Activated CD4-positive, alpha-beta memory T cell treated with anti-CD3 and anti-CD28 coated beads for 36 hours (primary cell): ENCODE measurements at regions of chr1 and their contacts with region 1.

Region 1: GRCh38 chr1:89298461-89298860 is 25.8 kb upstream of the GBP5 start:
- DNase-seq: no peak
- H3K4me3 Mint-ChIP-seq: no peak overlapping the region
- H3K27ac Mint-ChIP-seq: no peak overlapping the region
- H3K4me1 Mint-ChIP-seq: peaks cover 63% of the 10 kb centered on the region
- H3K27me3 Mint-ChIP-seq: no peaks in the 10 kb centered on the region

Region 2: DNA sequence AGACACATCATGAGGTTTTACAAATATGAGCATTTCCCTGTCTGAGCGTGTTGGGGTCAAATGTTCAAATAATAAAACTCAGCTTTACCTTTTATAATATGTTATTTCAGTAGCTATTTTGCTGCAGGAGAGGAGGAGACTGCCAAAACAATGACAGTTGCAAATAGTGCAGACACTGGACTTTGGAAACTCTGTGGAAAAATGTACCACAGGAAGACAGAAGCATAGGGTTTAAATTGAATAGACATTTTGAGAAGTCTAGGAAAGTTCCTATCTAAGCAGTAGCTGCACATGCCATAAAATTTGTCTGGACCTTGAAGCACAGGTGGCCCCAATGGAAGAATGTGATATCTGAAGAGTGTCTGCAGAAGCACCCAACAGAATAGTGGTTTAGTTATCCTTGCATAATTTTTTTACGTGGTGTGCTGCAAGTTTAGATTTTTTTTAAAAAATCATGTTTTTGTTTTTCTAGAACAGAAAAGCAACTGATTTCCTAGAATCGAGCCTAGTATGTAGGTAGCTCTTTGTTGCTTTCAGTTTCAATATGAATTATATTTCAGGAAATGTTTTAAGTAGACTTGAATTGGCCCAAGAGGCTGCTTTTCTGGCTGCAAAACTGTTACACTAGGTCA is 11.8 kb before region 1 on chr1:
- CTCF ChIA-PET with region 1: interaction called, 4 read pairs
- POLR2A ChIA-PET with region 1: interaction called, 5 read pairs
- intact Hi-C with region 1: loop called (anchors 1 kb)
- DNase-seq: no peak
- H3K4me3 Mint-ChIP-seq: peak overlapping the region; percentile 38
- H3K27ac Mint-ChIP-seq: peak overlapping the region; percentile 78
- H3K4me1 Mint-ChIP-seq: peaks cover 65% of the 10 kb centered on the region
- H3K27me3 Mint-ChIP-seq: no peaks in the 10 kb centered on the region